Activated naive CD4-positive, alpha-beta T cell treated with anti-CD3 and anti-CD28 coated beads for 36 hours (primary cell): ENCODE measurements at regions of chr1 and their contacts with region 1.

Region 1: GRCh38 chr1:100459358-100460114 is 78.4 kb upstream of the GPR88 start:
- DNase-seq: peak; percentile 86
- H3K4me3 Mint-ChIP-seq: no peak overlapping the region
- H3K27ac Mint-ChIP-seq: peak overlapping the region; percentile 43
- H3K4me1 Mint-ChIP-seq: peaks cover 46% of the 10 kb centered on the region
- H3K27me3 Mint-ChIP-seq: no peaks in the 10 kb centered on the region

Region 2: GRCh38 chr1:99969729-99970621 is 489.6 kb before region 1 on chr1 and contains the start of gene SLC35A3:
- CTCF ChIA-PET with region 1: no interaction called
- intact Hi-C with region 1: loop called (anchors 5 kb)
- DNase-seq: peak; percentile 85
- H3K4me3 Mint-ChIP-seq: peak within 1 kb of the TSS; percentile 96
- H3K27ac Mint-ChIP-seq: peak within 1 kb of the TSS; percentile 85
- H3K4me1 Mint-ChIP-seq: peaks cover 22% of the 10 kb centered on the region
- H3K27me3 Mint-ChIP-seq: no peaks in the 10 kb centered on the region
- total RNA-seq, gene SLC35A3: 13.8 to 15.5 TPM

Region 3: DNA sequence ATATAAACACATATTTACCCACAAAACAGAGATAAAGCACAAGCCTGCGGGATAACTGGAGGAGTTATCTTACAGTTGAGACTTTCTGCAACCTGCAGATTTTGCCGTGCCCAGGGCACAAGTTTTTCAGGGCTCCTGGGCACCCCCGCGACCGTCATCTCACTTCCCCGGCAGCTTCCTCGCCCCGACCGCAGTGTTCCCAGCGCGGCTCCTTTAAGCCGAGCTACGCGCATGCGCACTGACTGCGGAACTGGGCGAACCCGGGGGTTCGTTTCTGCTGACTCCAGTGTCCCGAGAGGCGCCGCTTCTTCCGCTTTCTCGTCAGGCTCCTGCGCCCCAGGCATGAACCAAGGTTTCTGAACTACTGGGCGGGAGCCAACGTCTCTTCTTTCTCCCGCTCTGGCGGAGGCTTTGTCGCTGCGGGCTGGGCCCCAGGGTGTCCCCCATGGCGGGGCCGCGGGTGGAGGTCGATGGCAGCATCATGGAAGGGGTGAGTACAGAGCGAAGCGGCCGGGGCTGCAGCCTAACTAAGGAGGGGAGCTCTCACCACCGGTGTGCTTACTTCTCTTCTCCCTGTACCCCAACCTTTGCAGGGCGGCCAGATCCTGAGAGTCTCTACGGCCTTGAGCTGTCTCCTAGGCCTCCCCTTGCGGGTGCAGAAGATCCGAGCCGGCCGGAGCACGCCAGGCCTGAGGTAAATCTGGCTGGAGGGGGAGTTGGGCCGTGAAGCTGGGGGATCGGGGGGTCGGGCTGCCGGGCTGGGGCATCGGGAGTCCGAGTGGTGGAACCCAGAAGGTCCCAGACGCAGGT is 193.4 kb before region 1 on chr1 and contains the start of gene RTCA:
- CTCF ChIA-PET with region 1: interaction called, 12 read pairs
- intact Hi-C with region 1: loop called (anchors 1 kb)
- DNase-seq: peak; percentile 96
- H3K4me3 Mint-ChIP-seq: peak within 1 kb of the TSS; percentile 100
- H3K27ac Mint-ChIP-seq: peak within 1 kb of the TSS; percentile 96
- H3K4me1 Mint-ChIP-seq: peaks cover 35% of the 10 kb centered on the region
- H3K27me3 Mint-ChIP-seq: no peaks in the 10 kb centered on the region
- total RNA-seq, gene RTCA: 36.7 to 37.5 TPM

Region 4: GRCh38 chr1:100351095-100351891 is 108.2 kb before region 1 on chr1:
- CTCF ChIA-PET with region 1: interaction called, 15 read pairs
- intact Hi-C with region 1: loop called (anchors 1 kb)
- DNase-seq: peak; percentile 92
- H3K4me3 Mint-ChIP-seq: peak overlapping the region; percentile 94
- H3K27ac Mint-ChIP-seq: peak overlapping the region; percentile 97
- H3K4me1 Mint-ChIP-seq: peaks cover 29% of the 10 kb centered on the region
- H3K27me3 Mint-ChIP-seq: no peaks in the 10 kb centered on the region

Region 5: GRCh38 chr1:100400404-100400803 is 59.1 kb before region 1 on chr1:
- CTCF ChIA-PET with region 1: interaction called, 10 read pairs
- intact Hi-C with region 1: no loop called
- DNase-seq: peak; percentile 73
- H3K4me3 Mint-ChIP-seq: peak overlapping the region; percentile 60
- H3K27ac Mint-ChIP-seq: peak overlapping the region; percentile 94
- H3K4me1 Mint-ChIP-seq: peaks cover 75% of the 10 kb centered on the region
- H3K27me3 Mint-ChIP-seq: no peaks in the 10 kb centered on the region

Region 6: DNA sequence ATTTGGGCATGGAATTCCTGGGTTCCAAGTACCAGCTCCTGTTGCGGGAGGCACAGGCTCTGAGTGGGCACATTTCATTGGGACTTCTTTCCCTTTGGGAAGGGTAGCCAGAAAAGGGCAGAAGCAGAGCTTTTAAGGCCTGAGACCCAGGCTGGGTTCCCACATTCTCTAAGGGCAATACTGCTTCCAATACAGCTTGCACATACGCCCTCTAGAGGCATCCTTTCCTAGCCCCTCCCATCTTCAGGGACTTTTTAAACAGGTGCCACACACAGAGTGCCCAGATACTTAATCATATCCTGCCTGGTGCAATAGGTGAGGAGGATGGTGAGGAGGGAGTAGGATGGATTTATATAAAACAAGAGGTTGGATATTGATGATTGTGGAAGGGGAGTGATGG is 84.1 kb after region 1 on chr1:
- CTCF ChIA-PET with region 1: interaction called, 10 read pairs
- intact Hi-C with region 1: loop called (anchors 1 kb)
- DNase-seq: peak; percentile 75
- H3K4me3 Mint-ChIP-seq: no peak overlapping the region
- H3K27ac Mint-ChIP-seq: no peak overlapping the region
- H3K4me1 Mint-ChIP-seq: peaks cover 2% of the 10 kb centered on the region
- H3K27me3 Mint-ChIP-seq: peaks cover 23% of the 10 kb centered on the region

Region 7: GRCh38 chr1:101357444-101357986 is 898.0 kb after region 1 on chr1:
- CTCF ChIA-PET with region 1: no interaction called
- intact Hi-C with region 1: loop called (anchors 2 kb)
- DNase-seq: peak; percentile 85
- H3K4me3 Mint-ChIP-seq: no peak overlapping the region
- H3K27ac Mint-ChIP-seq: no peak overlapping the region
- H3K4me1 Mint-ChIP-seq: peaks cover 7% of the 10 kb centered on the region
- H3K27me3 Mint-ChIP-seq: no peaks in the 10 kb centered on the region